Adrenal gland (tissue), 19 donors: ENCODE measurements at regions of chr19 and their contacts with region 1.

Region 1: GRCh38 chr19:50909240-50910070 is 1.7 kb downstream of the KLK4 start:
- DNase-seq: peak in 6 of 7 donors; percentile 30 to 89 (median 68)
- H3K4me3 ChIP-seq: peak overlapping the region in 1 of 4 donors; percentile 39
- H3K27ac ChIP-seq: no peak overlapping the region
- H3K4me1 ChIP-seq: no peaks in the 10 kb centered on the region
- H3K27me3 ChIP-seq: peaks cover 30% of the 10 kb centered on the region
- CTCF ChIP-seq: no peak
- POLR2A ChIP-seq: no peak

Region 2: DNA sequence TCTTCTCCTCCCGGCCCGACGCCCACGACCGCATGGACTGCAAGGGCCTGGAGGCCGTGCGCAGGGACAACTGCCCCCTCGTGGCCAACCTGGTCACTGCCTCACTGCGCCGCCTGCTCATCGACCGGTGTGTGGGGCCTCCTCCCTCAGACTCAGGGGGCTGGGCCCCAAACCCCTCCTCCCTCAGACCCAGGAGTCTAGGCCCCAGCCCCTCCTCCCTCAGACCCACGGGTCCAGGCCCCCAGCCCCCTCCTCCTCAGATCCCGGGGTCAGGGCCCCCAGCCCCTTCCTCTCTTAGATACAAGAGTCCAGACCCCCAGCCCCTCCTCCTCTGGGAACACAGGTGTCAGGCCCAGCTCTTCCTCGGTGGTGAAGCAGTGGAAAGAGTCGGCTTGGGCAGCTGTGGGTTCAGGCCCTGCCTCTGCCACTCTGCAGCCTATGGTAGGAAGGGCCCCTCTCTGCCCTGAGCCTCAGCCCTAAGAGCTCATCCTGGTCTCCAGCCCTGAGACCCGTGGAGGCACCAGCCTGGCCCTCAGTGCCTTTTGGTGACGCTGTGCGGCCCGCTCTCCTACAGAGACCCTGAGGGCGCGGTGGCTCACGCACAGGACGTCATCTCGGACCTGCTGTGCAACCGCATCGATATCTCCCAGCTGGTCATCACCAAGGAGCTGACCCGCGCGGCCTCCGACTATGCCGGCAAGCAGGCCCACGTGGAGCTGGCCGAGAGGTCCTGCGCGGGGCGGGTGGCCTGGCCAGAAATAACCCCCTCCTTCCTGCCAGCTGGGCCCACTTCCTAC is 494.4 kb before region 1 on chr19:
- intact Hi-C with region 1: no loop called
- DNase-seq: peak; percentile 60 to 86 (median 76)
- H3K4me3 ChIP-seq: no peak overlapping the region
- H3K27ac ChIP-seq: no peak overlapping the region
- H3K4me1 ChIP-seq: no peaks in the 10 kb centered on the region
- H3K27me3 ChIP-seq: peaks cover 25% of the 10 kb centered on the region
- CTCF ChIP-seq: peak; percentile 74 to 92 (median 82)
- POLR2A ChIP-seq: no peak

Region 3: GRCh38 chr19:50794439-50795237 is 114.8 kb before region 1 on chr19:
- intact Hi-C with region 1: loop called in 1 of 2 experiments (anchors 10 kb)
- DNase-seq: no peak
- H3K4me3 ChIP-seq: no peak overlapping the region
- H3K27ac ChIP-seq: no peak overlapping the region
- H3K4me1 ChIP-seq: peaks cover 0 to 6% of the 10 kb centered on the region in 2 donors
- H3K27me3 ChIP-seq: no peaks in the 10 kb centered on the region
- CTCF ChIP-seq: no peak
- POLR2A ChIP-seq: no peak